Colonic mucosa (tissue), 4 donors: ENCODE measurements at regions of chr5 and their contacts with region 1.

Region 1: DNA sequence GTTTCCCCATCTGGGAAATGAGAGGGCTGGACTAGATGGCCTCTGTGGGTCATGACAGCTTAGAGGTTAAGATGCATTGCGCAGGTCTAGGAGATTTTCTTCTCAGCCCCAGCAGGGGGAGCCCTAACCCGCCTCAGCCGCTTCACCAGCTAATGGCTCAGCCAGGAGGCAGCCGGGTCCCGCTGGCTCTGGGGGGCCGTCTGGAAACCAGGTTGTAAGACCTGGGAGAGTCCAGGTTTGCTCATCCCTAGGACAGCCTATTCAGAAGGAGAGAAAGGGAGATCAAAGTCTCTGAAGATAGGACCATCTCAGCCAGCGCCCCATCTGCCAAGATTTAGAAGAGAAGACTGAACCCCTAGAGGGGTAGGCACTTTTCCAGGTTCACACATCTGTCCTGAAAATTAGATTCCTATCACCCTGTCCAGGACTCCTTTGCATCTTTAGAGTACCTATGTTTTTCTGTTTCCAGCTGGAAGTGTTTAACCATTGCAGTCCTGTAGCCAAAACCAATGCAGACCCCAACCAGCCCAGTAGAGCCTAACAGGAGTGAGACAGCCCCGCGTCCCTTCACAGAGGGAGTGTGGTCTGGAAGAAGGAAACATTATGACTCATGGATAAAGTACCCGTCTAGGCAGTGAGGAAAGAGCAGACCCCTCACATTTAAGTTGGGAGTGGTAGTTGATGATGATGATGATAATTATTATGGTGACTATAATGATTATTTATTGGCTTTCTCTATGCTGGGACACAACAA is 27.5 kb downstream of the SPARC start:
- DNase-seq: peak; percentile 79
- H3K4me3 ChIP-seq: no peak overlapping the region
- H3K27ac ChIP-seq: no peak overlapping the region
- H3K4me1 ChIP-seq: peaks cover 5% of the 10 kb centered on the region
- H3K27me3 ChIP-seq: no peaks in the 10 kb centered on the region
- CTCF ChIP-seq: peak; percentile 78

Region 2: DNA sequence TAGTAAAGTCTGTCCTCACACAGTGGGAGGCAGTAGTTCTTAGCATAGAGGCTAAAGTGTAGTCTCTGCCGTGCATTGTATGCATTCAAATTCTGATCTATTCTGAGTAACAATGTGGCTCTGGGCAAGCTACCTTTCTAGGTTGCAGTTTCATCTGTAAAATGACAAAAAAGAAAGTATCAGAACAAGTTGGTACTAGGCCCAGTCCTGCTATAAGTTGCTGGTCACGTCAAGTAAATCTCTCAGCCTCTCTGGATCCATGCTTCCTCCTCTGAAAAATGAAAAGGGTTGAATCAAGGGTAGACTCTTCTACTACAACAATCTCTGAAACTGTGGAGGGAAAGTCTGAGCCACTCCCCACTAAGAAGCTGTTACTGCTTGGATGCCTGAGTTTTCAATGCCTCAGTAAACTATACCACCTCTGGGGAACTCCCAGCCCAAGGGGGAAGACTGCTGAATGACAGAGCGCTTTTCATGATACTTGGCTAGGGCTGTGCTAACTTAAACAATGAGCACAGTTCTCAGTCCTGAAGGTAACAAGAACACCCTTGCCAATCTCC is 62.0 kb after region 1 on chr5:
- intact Hi-C with region 1: loop called (anchors 5 kb)
- DNase-seq: no peak
- H3K4me3 ChIP-seq: no peak overlapping the region
- H3K27ac ChIP-seq: no peak overlapping the region
- H3K4me1 ChIP-seq: no peaks in the 10 kb centered on the region
- H3K27me3 ChIP-seq: no peaks in the 10 kb centered on the region
- CTCF ChIP-seq: no peak

Region 3: GRCh38 chr5:151740336-151740942 is 81.3 kb after region 1 on chr5:
- intact Hi-C with region 1: loop called (anchors 1 kb)
- DNase-seq: peak; percentile 45
- H3K4me3 ChIP-seq: no peak overlapping the region
- H3K27ac ChIP-seq: peak overlapping the region; percentile 4
- H3K4me1 ChIP-seq: no peaks in the 10 kb centered on the region
- H3K27me3 ChIP-seq: no peaks in the 10 kb centered on the region
- CTCF ChIP-seq: peak; percentile 84

Region 4: GRCh38 chr5:152824316-152824715 is 1165.1 kb after region 1 on chr5:
- intact Hi-C with region 1: no loop called
- DNase-seq: no peak
- H3K4me3 ChIP-seq: no peak overlapping the region
- H3K27ac ChIP-seq: no peak overlapping the region
- H3K4me1 ChIP-seq: no peaks in the 10 kb centered on the region
- H3K27me3 ChIP-seq: no peaks in the 10 kb centered on the region
- CTCF ChIP-seq: no peak